Dorsolateral prefrontal cortex (tissue), 120 donors: ENCODE measurements at regions of chr15 and their contacts with region 1.

Region 1: DNA sequence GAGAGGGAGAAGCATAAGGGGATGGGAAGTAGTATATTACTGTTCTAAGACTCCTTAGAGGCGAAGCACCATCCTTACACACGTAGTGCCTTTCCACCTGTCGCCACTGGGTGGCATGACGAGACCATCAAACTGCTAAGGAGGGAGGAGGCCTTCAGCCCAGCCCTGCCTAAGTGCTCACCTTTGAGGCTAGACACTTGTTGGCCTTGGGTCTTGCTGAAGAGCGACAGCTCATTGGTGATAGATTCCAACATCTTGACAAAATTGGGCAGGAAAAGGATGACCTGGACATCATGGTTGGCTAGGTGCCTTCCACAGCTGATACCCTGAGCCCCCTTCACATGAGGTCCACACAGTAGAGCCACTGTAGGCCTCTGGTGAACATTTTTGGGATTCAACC is 19.6 kb downstream of the CLK3 start:
- DNase-seq: peak in 8 of 10 donors; percentile 55 to 81 (median 72)
- H3K4me3 ChIP-seq: no peak overlapping the region
- H3K27ac ChIP-seq: peak overlapping the region in 1 of 59 donors; percentile 44
- H3K27me3 ChIP-seq: no peaks in the 10 kb centered on the region
- CTCF ChIP-seq: peak; percentile 61 to 97 (median 91)

Region 2: GRCh38 chr15:74417246-74417645 is 218.0 kb before region 1 on chr15:
- intact Hi-C with region 1: no loop called
- DNase-seq: peak in 1 of 10 donors; percentile 86
- H3K4me3 ChIP-seq: peak overlapping the region in 7 of 59 donors; percentile 4 to 37 (median 11)
- H3K27ac ChIP-seq: peak overlapping the region in 57 of 59 donors; percentile 19 to 100 (median 98)
- H3K27me3 ChIP-seq: no peaks in the 10 kb centered on the region
- CTCF ChIP-seq: no peak

Region 3: GRCh38 chr15:74565381-74566085 is 69.7 kb before region 1 on chr15:
- intact Hi-C with region 1: no loop called
- DNase-seq: no peak
- H3K4me3 ChIP-seq: no peak overlapping the region
- H3K27ac ChIP-seq: no peak overlapping the region
- H3K27me3 ChIP-seq: no peaks in the 10 kb centered on the region
- CTCF ChIP-seq: no peak

Region 4: GRCh38 chr15:74584779-74585178 is 50.4 kb before region 1 on chr15:
- intact Hi-C with region 1: no loop called
- DNase-seq: peak in 8 of 10 donors; percentile 15 to 74 (median 68)
- H3K4me3 ChIP-seq: peak overlapping the region in 2 of 59 donors; percentile 13 to 14
- H3K27ac ChIP-seq: peak overlapping the region in 32 of 59 donors; percentile 5 to 79 (median 50)
- H3K27me3 ChIP-seq: no peaks in the 10 kb centered on the region
- CTCF ChIP-seq: no peak

Region 5: GRCh38 chr15:74920456-74920855 is 285.2 kb after region 1 on chr15:
- intact Hi-C with region 1: no loop called
- DNase-seq: no peak
- H3K4me3 ChIP-seq: no peak overlapping the region
- H3K27ac ChIP-seq: no peak overlapping the region
- H3K27me3 ChIP-seq: no peaks in the 10 kb centered on the region
- CTCF ChIP-seq: no peak

Region 6: DNA sequence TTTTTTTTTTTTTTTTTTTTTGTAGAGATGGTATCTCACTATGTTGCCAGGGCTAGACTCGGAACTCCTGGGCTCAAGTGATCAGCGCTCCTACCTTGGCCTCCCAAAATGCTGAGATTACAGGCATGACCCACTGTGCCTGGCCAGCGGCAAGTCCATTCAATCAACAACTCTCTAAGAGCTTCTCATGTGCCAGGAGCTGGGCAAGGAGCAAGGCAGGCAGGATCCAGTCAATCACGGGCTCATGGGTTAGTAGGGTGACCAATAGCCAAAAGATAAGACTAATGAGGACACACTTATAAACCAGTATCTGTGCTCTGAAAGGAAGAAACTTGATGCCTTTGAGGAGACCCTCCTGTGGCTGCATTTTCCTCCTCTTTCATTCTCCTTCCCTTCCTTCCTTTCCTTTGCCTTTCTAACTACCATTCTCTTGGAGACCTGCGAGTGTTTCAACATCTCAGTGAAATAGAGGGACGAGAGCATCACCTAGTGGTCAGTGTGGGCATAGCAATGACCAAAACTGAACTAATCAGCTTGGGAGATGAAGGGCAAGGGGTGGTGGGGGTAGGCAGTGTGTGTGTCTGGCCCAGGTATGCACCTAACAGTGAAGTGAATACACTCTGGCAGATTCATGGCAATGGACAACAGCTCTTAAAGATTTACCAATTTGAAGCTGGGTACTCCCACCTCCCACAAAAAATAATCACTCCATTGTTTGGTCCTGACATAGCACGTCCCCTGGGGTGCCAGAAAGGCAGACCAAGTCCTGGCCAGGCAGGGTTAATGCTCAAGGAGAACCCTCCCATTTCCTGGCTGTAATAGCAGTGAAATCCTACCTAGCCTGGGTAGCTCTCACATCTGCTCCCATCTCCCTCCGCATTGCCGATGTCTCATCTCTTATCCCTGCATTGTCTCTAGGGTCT is 315.1 kb after region 1 on chr15:
- intact Hi-C with region 1: loop called (anchors 2 to 5 kb)
- DNase-seq: peak; percentile 53 to 90 (median 68)
- H3K4me3 ChIP-seq: peak overlapping the region in 1 of 59 donors; percentile 6
- H3K27ac ChIP-seq: peak overlapping the region in 6 of 59 donors; percentile 1 to 50 (median 37)
- H3K27me3 ChIP-seq: no peaks in the 10 kb centered on the region
- CTCF ChIP-seq: peak; percentile 89 to 99 (median 95)